ENCODE measurements at regions of chr11 and their contacts with region 1.

Region 1: DNA sequence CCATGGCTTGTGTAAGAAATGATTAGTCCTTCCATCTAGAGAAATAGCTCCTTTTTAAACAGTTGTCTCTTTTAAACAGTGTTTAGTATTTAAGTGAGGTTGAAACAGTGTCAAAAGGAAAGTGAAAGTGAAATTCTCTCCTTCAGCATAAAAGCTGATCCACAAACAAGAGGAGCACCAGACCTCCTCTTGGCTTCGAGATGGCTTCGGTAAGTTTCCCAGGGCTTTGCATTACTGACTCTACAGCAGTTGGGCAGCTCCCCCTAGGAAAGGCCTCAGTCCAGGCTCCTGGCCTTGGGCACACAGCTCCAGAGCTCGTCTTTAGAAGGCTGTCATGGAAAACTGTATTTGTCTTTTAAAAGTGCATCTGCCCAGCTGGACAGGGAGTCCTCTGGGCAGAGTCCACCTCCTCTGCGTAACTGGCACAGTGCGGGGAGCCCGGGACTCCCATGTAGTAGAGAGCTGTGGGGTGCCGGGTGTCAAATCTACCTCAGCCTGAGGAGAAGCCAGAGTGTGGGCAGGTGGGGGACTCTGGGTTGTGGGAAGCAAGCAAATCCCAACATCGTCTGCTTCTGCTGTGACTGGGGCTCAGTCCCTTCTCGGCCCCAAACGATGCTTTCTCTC is at the start of gene PLAAT4:
- DNase-seq: peak in 7 of 10 donors; percentile 28 to 64 (median 51)
- ATAC-seq: peak; percentile 66 to 74
- H3K4me3 Mint-ChIP-seq: peak within 1 kb of the TSS; percentile 89 to 99 (median 94)
- H3K27ac Mint-ChIP-seq: peak within 1 kb of the TSS; percentile 91 to 99 (median 98)
- H3K4me1 Mint-ChIP-seq: peaks cover 42 to 94% (median 90%) of the 10 kb centered on the region in 4 donors
- H3K27me3 Mint-ChIP-seq: no peaks in the 10 kb centered on the region
- polyA plus RNA-seq, gene PLAAT4: 460 to 532 (median 464) TPM

Region 2: GRCh38 chr11:63459586-63459985 is 77.2 kb before region 1 on chr11:
- POLR2A ChIA-PET with region 1: no interaction called
- DNase-seq: no peak
- ATAC-seq: no peak
- H3K4me3 Mint-ChIP-seq: no peak overlapping the region
- H3K27ac Mint-ChIP-seq: no peak overlapping the region
- H3K4me1 Mint-ChIP-seq: no peaks in the 10 kb centered on the region
- H3K27me3 Mint-ChIP-seq: peaks cover 0 to 12% (median 0%) of the 10 kb centered on the region in 5 donors

Region 3: GRCh38 chr11:63547066-63547465 is 10.3 kb after region 1 on chr11:
- POLR2A ChIA-PET with region 1: interaction called, 226 read pairs
- DNase-seq: no peak
- ATAC-seq: no peak
- H3K4me3 Mint-ChIP-seq: no peak overlapping the region
- H3K27ac Mint-ChIP-seq: peak overlapping the region; percentile 45 to 89 (median 74)
- H3K4me1 Mint-ChIP-seq: peaks cover 27 to 62% (median 54%) of the 10 kb centered on the region in 4 donors
- H3K27me3 Mint-ChIP-seq: no peaks in the 10 kb centered on the region

Region 4: GRCh38 chr11:63564056-63564774 is 27.4 kb after region 1 on chr11:
- POLR2A ChIA-PET with region 1: interaction called, 32 read pairs
- DNase-seq: no peak
- ATAC-seq: no peak
- H3K4me3 Mint-ChIP-seq: peak overlapping the region in 5 of 10 donors; percentile 2 to 43 (median 19)
- H3K27ac Mint-ChIP-seq: peak overlapping the region in 9 of 10 donors; percentile 2 to 86 (median 54)
- H3K4me1 Mint-ChIP-seq: peaks cover 30 to 71% (median 61%) of the 10 kb centered on the region in 4 donors
- H3K27me3 Mint-ChIP-seq: no peaks in the 10 kb centered on the region

Region 5: DNA sequence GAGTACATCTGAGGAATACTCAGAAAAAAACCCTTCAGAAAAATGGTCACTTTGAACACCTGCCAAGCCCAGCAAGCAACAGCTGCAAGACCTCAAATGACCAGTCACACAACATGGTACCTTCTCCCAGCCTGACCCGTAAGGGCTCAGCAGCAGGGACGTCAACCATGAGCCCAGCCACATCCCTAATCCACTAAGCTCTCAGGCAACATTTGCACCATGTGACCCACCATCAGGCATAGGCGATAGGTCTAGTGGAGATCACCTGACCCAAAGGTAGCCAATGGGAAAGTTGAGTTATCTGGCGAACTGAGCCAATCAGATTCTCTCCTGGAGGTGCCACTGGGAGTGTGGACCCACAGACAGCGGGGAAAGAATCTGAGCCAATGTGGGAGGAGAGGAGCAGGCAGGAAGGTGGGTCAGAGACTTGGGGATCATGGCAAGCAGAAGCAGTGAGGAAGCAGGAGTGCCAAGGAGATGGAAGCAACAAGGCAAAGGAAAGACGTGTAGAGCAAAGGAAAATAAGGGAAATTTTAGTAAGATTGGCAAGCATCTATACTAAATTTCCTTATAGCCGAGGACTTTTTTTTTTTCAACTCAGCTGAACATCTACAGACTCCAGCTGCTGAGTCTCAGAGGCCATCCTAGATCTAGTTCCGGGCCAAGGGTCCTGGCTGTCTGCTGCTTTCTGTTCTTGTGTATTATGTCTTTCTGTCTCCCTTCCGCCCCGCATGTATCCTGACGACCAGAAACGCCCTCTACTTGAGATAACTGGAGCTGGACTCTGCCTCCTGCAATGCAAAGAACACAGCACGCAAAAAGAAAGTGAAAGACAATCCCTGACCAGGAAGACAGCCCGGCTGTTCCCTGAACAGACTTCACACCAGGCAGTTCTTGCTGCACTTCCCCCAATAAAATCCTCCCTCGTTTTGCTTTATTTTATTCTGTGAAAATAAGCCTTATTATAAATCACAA is 37.4 kb after region 1 on chr11:
- POLR2A ChIA-PET with region 1: interaction called, 25 read pairs
- DNase-seq: peak in 7 of 10 donors; percentile 20 to 65 (median 36)
- ATAC-seq: peak; percentile 87 to 89
- H3K4me3 Mint-ChIP-seq: peak overlapping the region; percentile 80 to 96 (median 90)
- H3K27ac Mint-ChIP-seq: peak overlapping the region; percentile 86 to 98 (median 96)
- H3K4me1 Mint-ChIP-seq: peaks cover 19 to 42% (median 33%) of the 10 kb centered on the region in 4 donors
- H3K27me3 Mint-ChIP-seq: no peaks in the 10 kb centered on the region

Region 6: GRCh38 chr11:63592975-63593395 is 56.2 kb after region 1 on chr11:
- POLR2A ChIA-PET with region 1: no interaction called
- DNase-seq: no peak
- ATAC-seq: no peak
- H3K4me3 Mint-ChIP-seq: no peak overlapping the region
- H3K27ac Mint-ChIP-seq: peak overlapping the region in 4 of 10 donors; percentile 7 to 69 (median 25)
- H3K4me1 Mint-ChIP-seq: peaks cover 0 to 5% (median 0%) of the 10 kb centered on the region in 4 donors
- H3K27me3 Mint-ChIP-seq: no peaks in the 10 kb centered on the region

Measured in naive thymus-derived CD8-positive, alpha-beta T cell (primary cell).